ENCODE measurements at regions of chr5 and their contacts with region 1.

Region 1: GRCh38 chr5:7391814-7392692 is 3.9 kb upstream of the ADCY2 start:
- DNase-seq: peak; percentile 5
- H3K4me3 Mint-ChIP-seq: no peak overlapping the region
- H3K27ac Mint-ChIP-seq: no peak overlapping the region
- H3K4me1 Mint-ChIP-seq: no peaks in the 10 kb centered on the region
- H3K27me3 Mint-ChIP-seq: peaks cover 3% of the 10 kb centered on the region
- CTCF ChIP-seq: peak; percentile 26

Region 2: DNA sequence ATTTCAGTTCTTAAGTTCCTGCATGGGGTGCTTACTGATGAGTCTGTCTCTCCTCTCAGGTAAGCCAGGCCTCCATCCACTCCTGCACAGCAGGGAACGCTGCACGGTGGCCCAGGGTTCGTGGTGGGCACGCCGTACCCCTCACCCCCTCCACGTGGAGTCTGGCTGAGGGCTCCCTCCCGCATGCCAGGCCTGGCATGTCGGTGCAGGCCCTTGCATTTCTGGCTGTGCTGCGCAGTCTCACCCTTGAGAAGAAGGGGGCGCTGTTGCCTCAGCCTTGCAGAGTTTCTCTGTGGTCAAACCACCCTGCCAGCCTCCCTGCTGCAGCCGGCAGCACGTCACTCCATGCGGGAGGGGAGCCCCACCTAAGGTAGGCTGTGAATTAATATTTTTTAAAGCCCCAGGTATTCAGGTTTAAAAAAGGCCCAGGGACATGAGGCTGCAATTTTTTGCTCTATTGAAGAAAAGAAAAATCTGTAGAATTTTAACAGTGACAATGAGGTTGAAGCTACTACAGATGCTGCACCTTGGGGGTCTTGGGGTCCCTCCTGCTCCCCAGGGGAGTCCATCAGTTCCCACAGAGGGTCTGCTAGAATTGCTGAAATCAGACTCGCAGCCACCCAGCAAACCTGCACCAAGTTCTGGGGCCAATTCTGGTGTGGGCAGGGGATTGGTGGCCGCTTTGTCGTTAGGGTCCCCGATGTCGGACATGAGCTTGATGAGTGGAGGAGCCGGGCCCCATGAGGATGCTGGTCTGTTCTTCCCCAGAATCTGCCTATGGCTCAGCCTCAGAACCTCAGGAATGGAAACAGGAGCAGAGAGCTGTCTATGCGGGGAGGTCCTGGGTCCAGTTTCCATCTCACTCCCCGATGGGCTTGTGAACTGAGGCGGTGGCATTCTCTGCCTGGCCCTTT is 626.2 kb before region 1 on chr5:
- CTCF ChIA-PET with region 1: interaction called, 4 read pairs
- POLR2A ChIA-PET with region 1: no interaction called
- intact Hi-C with region 1: loop called (anchors 2 kb)
- DNase-seq: peak; percentile 89
- H3K4me3 Mint-ChIP-seq: peak overlapping the region; percentile 65
- H3K27ac Mint-ChIP-seq: no peak overlapping the region
- H3K4me1 Mint-ChIP-seq: peaks cover 23% of the 10 kb centered on the region
- H3K27me3 Mint-ChIP-seq: no peaks in the 10 kb centered on the region
- CTCF ChIP-seq: peak; percentile 91

Region 3: GRCh38 chr5:7261049-7261448 is 131.0 kb before region 1 on chr5:
- CTCF ChIA-PET with region 1: interaction called, 5 read pairs
- POLR2A ChIA-PET with region 1: no interaction called
- intact Hi-C with region 1: loop called (anchors 1 kb)
- DNase-seq: peak; percentile 25
- H3K4me3 Mint-ChIP-seq: no peak overlapping the region
- H3K27ac Mint-ChIP-seq: no peak overlapping the region
- H3K4me1 Mint-ChIP-seq: no peaks in the 10 kb centered on the region
- H3K27me3 Mint-ChIP-seq: peaks cover 2% of the 10 kb centered on the region
- CTCF ChIP-seq: peak; percentile 45

Measured in MCF 10A (cell line).